ENCODE measurements at regions of chr7 and their contacts with region 1.

Region 1: GRCh38 chr7:73451780-73452398 is 18.3 kb downstream of the FZD9 start:
- DNase-seq: peak; percentile 77
- H3K4me3 Mint-ChIP-seq: no peak overlapping the region
- H3K27ac Mint-ChIP-seq: no peak overlapping the region
- H3K4me1 Mint-ChIP-seq: peaks cover 12% of the 10 kb centered on the region
- H3K27me3 Mint-ChIP-seq: no peaks in the 10 kb centered on the region

Region 2: DNA sequence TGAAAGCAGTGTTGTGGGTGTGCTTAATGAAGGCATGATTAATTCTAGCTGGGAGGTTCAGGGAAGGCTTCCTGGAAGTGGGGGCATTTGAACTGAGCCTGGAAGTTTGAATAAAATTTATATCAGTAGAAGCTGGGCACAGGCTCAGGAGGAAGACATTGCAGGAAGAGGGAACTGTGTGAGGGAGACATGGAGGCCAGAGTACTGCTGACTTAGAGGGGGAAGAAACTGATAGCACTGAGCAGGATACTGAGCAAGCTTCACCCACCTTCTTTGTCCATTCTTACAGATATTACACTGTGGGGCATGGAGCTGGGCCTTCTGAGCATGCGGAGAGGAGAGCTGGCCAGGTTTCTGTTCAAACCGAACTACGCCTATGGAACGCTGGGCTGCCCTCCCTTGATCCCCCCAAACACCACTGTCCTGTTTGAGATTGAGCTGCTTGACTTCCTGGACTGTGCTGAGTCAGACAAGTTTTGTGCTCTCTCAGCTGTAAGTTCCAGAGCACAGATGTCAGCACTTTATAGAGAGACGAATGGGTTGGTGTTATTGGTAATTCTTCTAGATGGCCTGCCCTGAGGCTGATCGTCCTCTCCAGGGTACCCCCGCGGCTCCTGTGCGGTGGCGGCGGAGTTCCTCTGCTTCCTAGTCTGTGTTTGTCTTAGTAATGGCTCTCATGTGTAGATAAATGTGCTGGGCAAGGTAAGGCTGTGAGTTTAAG is 121.9 kb before region 1 on chr7:
- intact Hi-C with region 1: loop called (anchors 2 kb)
- DNase-seq: no peak
- H3K4me3 Mint-ChIP-seq: no peak overlapping the region
- H3K27ac Mint-ChIP-seq: no peak overlapping the region
- H3K4me1 Mint-ChIP-seq: peaks cover 2% of the 10 kb centered on the region
- H3K27me3 Mint-ChIP-seq: peaks cover 5% of the 10 kb centered on the region

Region 3: GRCh38 chr7:73496626-73497025 is 44.7 kb after region 1 on chr7:
- intact Hi-C with region 1: loop called (anchors 5 kb)
- DNase-seq: no peak
- H3K4me3 Mint-ChIP-seq: no peak overlapping the region
- H3K27ac Mint-ChIP-seq: no peak overlapping the region
- H3K4me1 Mint-ChIP-seq: peaks cover 12% of the 10 kb centered on the region
- H3K27me3 Mint-ChIP-seq: no peaks in the 10 kb centered on the region